ENCODE measurements at regions of chr20 and their contacts with region 1.

Region 1: GRCh38 chr20:29878281-29878741 is 1379.2 kb upstream of the DEFB115 start:
- DNase-seq: peak; percentile 93
- H3K4me3 ChIP-seq: peak overlapping the region; percentile 56 to 65
- H3K27ac ChIP-seq: peak overlapping the region in 1 of 2 experiments; percentile 76; a peak in 2 of 4 replicates
- H3K4me1 ChIP-seq: peaks cover 0 to 11% of the 10 kb centered on the region in 2 experiments; a peak in 1 of 4 replicates
- H3K27me3 ChIP-seq: no peaks in the 10 kb centered on the region
- CTCF ChIP-seq: no peak
- EP300 ChIP-seq: no peak
- RAD21 ChIP-seq: no peak

Region 2: GRCh38 chr20:30811885-30812671 is 933.8 kb after region 1 on chr20:
- CTCF ChIA-PET with region 1: interaction called, 6 read pairs
- POLR2A ChIA-PET with region 1: interaction called, 12 read pairs
- DNase-seq: peak; percentile 88
- H3K4me3 ChIP-seq: peak overlapping the region in 1 of 2 experiments; percentile 46; a peak in 2 of 4 replicates
- H3K27ac ChIP-seq: peak overlapping the region in 1 of 2 experiments; percentile 8; a peak in 1 of 4 replicates
- H3K4me1 ChIP-seq: no peaks in the 10 kb centered on the region; a peak in 1 of 4 replicates
- H3K27me3 ChIP-seq: no peaks in the 10 kb centered on the region
- CTCF ChIP-seq: no peak
- EP300 ChIP-seq: no peak
- RAD21 ChIP-seq: no peak